OCI-LY7 (cell line): ENCODE measurements at regions of chr6 and their contacts with region 1.

Region 1: DNA sequence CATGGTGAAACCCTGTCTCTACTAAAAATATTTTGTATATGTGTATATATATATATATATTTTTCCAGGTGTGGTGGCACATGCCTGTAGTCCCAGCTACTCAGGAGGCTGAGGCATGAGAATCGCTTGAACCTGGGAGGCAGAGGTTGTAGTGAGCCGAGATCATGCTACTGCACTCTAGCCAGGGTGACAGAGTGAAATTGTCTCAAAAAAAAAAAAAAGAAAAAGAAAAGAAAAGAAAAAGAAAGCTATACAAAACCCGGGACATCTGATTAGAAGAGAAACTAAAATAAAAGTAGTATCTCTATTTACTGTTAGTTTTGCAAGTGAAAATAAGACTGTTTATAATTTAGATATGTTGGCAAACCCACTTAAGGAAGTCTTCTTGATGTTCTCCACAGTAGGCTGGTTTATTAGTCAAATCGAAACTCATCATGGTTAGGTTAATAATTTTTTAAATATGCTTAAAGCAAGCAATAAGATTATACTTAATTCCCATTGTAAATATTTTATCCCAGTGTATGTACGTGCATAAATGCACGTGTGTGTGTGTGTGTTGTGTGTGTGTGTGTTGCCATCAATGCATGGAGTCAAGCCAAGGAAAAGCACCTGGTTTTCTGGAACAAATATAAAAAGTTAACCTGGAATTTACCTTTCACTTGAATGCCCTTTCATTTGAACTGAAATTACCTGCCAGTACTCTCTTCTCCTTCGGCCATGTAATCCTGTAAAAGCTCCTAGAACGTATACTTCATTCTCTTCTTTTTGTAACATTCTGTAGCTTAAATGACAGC is 7.1 kb downstream of the VNN2 start:
- DNase-seq: no peak
- H3K4me3 ChIP-seq: no peak overlapping the region
- H3K27ac ChIP-seq: no peak overlapping the region
- H3K4me1 ChIP-seq: peaks cover 12% of the 10 kb centered on the region
- CTCF ChIP-seq: no peak

Region 2: GRCh38 chr6:132084833-132085509 is 665.7 kb before region 1 on chr6:
- CTCF ChIA-PET with region 1: no interaction called
- POLR2A ChIA-PET with region 1: no interaction called
- intact Hi-C with region 1: no loop called
- DNase-seq: no peak
- H3K4me3 ChIP-seq: no peak overlapping the region
- H3K27ac ChIP-seq: no peak overlapping the region
- H3K4me1 ChIP-seq: peaks cover 14% of the 10 kb centered on the region
- CTCF ChIP-seq: no peak

Region 3: DNA sequence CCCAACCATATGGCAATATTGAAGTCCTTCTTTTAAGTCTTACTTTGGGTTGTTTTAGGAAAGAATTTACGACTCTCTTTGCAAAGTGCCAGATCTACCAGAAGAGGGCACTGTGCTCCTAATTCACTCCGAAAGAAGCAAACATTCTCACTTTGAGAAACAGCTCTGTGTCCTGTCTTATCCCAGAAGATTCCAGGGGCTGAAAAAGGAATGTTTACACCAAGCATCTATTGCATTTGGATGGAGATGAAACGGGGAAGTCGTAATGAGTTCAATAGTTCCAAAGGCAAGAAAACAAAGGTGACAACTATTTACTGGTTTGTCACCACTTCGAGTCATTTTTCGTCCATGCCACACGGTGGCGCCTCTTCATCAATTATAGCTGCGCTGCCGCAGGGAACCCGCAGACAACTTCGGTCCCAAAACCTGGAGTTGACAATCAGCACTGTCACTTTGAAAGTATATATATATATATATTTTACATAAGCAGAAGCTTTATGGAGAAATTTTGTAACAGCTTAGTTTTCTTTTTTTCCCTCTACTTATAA is 471.0 kb before region 1 on chr6:
- CTCF ChIA-PET with region 1: no interaction called
- POLR2A ChIA-PET with region 1: no interaction called
- intact Hi-C with region 1: loop called (anchors 10 kb)
- DNase-seq: peak; percentile 88
- H3K4me3 ChIP-seq: peak overlapping the region; percentile 63
- H3K27ac ChIP-seq: peak overlapping the region; percentile 22
- H3K4me1 ChIP-seq: peaks cover 20% of the 10 kb centered on the region
- CTCF ChIP-seq: peak; percentile 100

Region 4: GRCh38 chr6:133040094-133040802 is 289.6 kb after region 1 on chr6:
- CTCF ChIA-PET with region 1: no interaction called
- POLR2A ChIA-PET with region 1: no interaction called
- intact Hi-C with region 1: no loop called
- DNase-seq: peak; percentile 4
- H3K4me3 ChIP-seq: no peak overlapping the region
- H3K27ac ChIP-seq: no peak overlapping the region
- H3K4me1 ChIP-seq: no peaks in the 10 kb centered on the region
- CTCF ChIP-seq: peak; percentile 66